ENCODE measurements at regions of chr12 and their contacts with region 1.

Region 1: GRCh38 chr12:121802846-121803630 is 771 bp upstream of the SETD1B start:
- DNase-seq: peak; percentile 93
- H3K4me3 Mint-ChIP-seq: peak overlapping the region; percentile 91
- H3K27ac Mint-ChIP-seq: peak overlapping the region; percentile 99
- H3K4me1 Mint-ChIP-seq: peaks cover 30% of the 10 kb centered on the region
- H3K27me3 Mint-ChIP-seq: no peaks in the 10 kb centered on the region

Region 2: GRCh38 chr12:121214855-121215745 is 587.9 kb before region 1 on chr12:
- CTCF ChIA-PET with region 1: no interaction called
- POLR2A ChIA-PET with region 1: no interaction called
- intact Hi-C with region 1: no loop called
- DNase-seq: peak; percentile 32
- H3K4me3 Mint-ChIP-seq: peak overlapping the region; percentile 9
- H3K27ac Mint-ChIP-seq: peak overlapping the region; percentile 93
- H3K4me1 Mint-ChIP-seq: peaks cover 48% of the 10 kb centered on the region
- H3K27me3 Mint-ChIP-seq: no peaks in the 10 kb centered on the region

Region 3: GRCh38 chr12:121781998-121782979 is 20.7 kb before region 1 on chr12:
- CTCF ChIA-PET with region 1: interaction called, 856 read pairs
- POLR2A ChIA-PET with region 1: interaction called, 22 read pairs
- intact Hi-C with region 1: no loop called
- DNase-seq: peak; percentile 88
- H3K4me3 Mint-ChIP-seq: peak overlapping the region; percentile 68
- H3K27ac Mint-ChIP-seq: peak overlapping the region; percentile 96
- H3K4me1 Mint-ChIP-seq: peaks cover 70% of the 10 kb centered on the region
- H3K27me3 Mint-ChIP-seq: no peaks in the 10 kb centered on the region